Posterior vena cava (tissue), 2 donors: ENCODE measurements at regions of chr2 and their contacts with region 1.

Region 1: GRCh38 chr2:52445686-52446085 is 1321.9 kb upstream of the CHAC2 start:
- DNase-seq: no peak

Region 2: DNA sequence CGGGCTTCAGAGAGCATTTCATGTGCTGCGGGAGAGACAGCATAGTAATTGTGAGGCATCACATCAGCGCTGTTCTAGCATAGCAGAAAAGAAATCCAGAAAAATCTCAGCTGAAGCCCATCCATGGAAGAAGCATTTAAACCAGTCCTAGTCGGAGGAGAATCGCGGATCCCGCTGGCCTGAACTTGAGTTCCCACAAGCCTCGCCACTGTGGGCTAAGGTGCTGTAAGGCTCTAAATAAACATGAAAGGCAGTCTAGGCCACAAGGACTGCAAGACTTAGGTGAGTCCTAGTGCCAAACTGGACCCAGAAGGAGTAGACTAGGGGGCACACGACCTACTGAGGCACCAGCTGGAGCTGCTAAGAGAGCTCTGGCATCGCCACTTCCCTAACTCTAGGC is 96.6 kb after region 1 on chr2:
- intact Hi-C with region 1: loop called in 1 of 2 experiments (anchors 5 kb)
- DNase-seq: peak; percentile 58